Posterior cingulate gyrus (tissue), 11 donors: ENCODE measurements at regions of chr14 and their contacts with region 1.

Region 1: GRCh38 chr14:32833168-32833567 is 105.5 kb upstream of the NPAS3 start:
- DNase-seq: no peak

Region 2: GRCh38 chr14:32531942-32532515 is 301.1 kb before region 1 on chr14:
- intact Hi-C with region 1: no loop called
- DNase-seq: no peak

Region 3: GRCh38 chr14:32934073-32934890 is 101.1 kb after region 1 on chr14:
- intact Hi-C with region 1: loop called (anchors 5 kb)
- DNase-seq: peak; percentile 56 to 94 (median 68)

Region 4: DNA sequence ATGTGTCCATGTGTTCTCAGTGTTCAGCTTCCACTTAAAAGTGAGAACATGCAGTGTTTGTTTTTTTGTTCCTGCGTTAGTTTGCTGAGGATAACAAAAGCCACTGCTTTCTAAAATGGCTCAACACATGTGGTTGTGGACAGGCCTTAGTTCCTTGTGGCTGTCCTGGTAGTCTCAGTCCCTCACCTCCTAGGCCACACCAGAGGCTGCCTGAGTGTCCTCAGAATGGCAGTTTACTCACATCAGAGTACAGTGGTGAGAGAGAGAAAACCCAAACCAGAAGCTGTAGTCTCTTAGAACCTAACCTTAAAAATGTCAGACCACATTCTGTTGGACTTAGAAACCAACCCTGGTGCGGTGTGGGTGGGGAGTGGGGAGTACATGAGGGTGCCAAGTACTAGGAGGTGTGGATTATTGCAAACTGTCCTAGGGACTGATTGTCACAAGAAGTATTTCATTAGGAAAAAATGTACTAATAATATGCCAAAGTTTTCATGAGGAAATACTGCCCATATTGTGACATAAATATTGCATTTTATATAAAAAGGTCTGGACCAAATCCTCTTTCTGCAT is 135.9 kb after region 1 on chr14:
- intact Hi-C with region 1: no loop called
- DNase-seq: no peak